Caco-2 (cell line): ENCODE measurements at regions of chr17 and their contacts with region 1.

Region 1: DNA sequence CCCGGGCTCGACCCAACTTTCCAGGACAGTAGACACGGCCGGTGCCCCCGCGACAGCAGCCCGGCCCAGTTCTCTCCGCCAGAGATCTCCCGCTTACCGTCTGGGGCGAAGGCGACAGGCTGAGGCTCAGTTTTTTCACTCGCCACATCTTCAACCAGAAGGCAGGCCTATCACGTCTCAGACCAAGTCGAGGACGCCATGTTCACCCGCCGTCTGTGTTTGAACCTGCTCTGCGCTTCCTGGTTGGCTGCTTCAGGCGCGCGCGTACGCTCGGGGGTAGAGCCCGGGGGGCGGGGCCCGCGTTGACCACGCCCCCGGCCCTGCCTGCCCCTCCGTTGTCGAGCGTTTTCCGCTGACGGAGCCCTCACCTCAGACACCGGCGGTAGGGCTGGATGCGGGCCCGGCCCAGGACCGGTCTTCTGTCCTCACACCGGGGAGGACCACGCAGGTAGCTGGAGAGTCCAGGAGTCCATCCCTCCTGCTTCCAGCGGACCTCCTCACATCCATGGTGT is at the start of gene SPAG5:
- DNase-seq: peak; percentile 94 to 98
- H3K4me3 ChIP-seq: peak within 1 kb of the TSS; percentile 86
- H3K4me3 Mint-ChIP-seq: peak within 1 kb of the TSS; percentile 96
- H3K27ac Mint-ChIP-seq: peak within 1 kb of the TSS; percentile 99
- H3K4me1 ChIP-seq: peaks cover 6% of the 10 kb centered on the region
- H3K4me1 Mint-ChIP-seq: peaks cover 20% of the 10 kb centered on the region
- H3K27me3 ChIP-seq: no peaks in the 10 kb centered on the region
- H3K27me3 Mint-ChIP-seq: no peaks in the 10 kb centered on the region
- CTCF ChIP-seq: no peak
- total RNA-seq, gene SPAG5: 113 TPM in 2 replicates

Region 2: GRCh38 chr17:28366605-28367004 is 232.2 kb before region 1 on chr17:
- CTCF ChIA-PET with region 1: no interaction called
- POLR2A ChIA-PET with region 1: no interaction called
- intact Hi-C with region 1: no loop called
- DNase-seq: peak in 1 of 2 experiments; percentile 46
- H3K4me3 ChIP-seq: no peak overlapping the region
- H3K4me3 Mint-ChIP-seq: no peak overlapping the region
- H3K27ac Mint-ChIP-seq: peak overlapping the region; percentile 88
- H3K4me1 ChIP-seq: peaks cover 42% of the 10 kb centered on the region
- H3K4me1 Mint-ChIP-seq: peaks cover 42% of the 10 kb centered on the region
- H3K27me3 ChIP-seq: no peaks in the 10 kb centered on the region
- H3K27me3 Mint-ChIP-seq: no peaks in the 10 kb centered on the region
- CTCF ChIP-seq: peak; percentile 10 to 31

Region 3: GRCh38 chr17:28576758-28577465 is 21.9 kb before region 1 on chr17 and contains the start of gene ALDOC:
- CTCF ChIA-PET with region 1: interaction called, 3 read pairs
- POLR2A ChIA-PET with region 1: interaction called, 9 read pairs
- intact Hi-C with region 1: loop called (anchors 2 kb)
- DNase-seq: peak; percentile 96 to 97
- H3K4me3 ChIP-seq: peak within 1 kb of the TSS; percentile 34
- H3K4me3 Mint-ChIP-seq: peak within 1 kb of the TSS; percentile 61
- H3K27ac Mint-ChIP-seq: peak within 1 kb of the TSS; percentile 40
- H3K4me1 ChIP-seq: peaks cover 23% of the 10 kb centered on the region
- H3K4me1 Mint-ChIP-seq: peaks cover 20% of the 10 kb centered on the region
- H3K27me3 ChIP-seq: no peaks in the 10 kb centered on the region
- H3K27me3 Mint-ChIP-seq: no peaks in the 10 kb centered on the region
- CTCF ChIP-seq: no peak
- total RNA-seq, gene ALDOC: 16.3 and 17.7 TPM in 2 replicates